ENCODE measurements at regions of chr13 and their contacts with region 1.

Region 1: DNA sequence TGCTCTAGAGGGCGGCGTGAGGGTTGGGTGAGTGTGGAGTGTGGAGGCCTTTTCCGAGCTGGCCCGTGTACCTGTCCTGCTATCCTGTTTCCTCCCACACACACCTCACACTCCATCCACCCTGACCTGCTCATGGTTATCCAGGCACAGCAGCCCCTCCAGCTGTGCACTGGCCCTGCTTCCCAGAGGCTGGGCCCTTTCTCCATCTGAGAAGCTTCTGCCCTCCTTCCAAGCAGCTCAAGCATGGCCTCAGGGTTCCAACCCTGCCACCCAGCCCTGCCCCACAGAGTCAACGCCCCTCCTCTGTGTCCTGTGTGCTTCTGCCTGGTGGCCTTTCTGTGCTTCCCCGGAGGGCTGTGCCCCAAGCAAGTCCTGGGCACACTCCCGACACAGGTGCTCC is 86.9 kb downstream of the SOX1 start:
- DNase-seq: no peak
- ATAC-seq: no peak
- H3K4me3 ChIP-seq: no peak overlapping the region
- H3K27ac ChIP-seq: no peak overlapping the region
- H3K4me1 ChIP-seq: no peaks in the 10 kb centered on the region
- H3K27me3 ChIP-seq: no peaks in the 10 kb centered on the region

Region 2: DNA sequence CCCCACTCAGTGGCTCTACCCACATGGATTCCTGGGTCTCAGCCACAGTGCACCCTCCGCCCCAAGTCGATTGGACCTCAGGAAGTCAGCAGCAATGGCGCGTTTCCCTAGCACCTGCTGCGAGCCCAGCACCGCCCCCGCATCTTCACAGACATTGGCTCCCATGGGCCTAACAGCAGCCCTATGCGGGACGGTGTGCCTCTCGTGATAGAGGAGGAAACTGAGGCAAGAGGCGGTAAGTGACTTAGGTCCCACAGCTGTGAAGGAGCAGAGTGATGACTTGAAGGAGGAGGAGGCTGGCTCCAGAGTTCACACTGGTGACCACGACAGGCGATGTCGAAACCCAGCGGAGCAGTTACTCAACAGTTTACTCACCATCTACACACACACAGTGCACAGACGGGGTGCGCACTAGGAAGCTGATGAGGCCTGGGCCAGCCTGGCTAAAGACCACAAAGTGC is 191.4 kb before region 1 on chr13:
- intact Hi-C with region 1: no loop called
- DNase-seq: no peak
- ATAC-seq: no peak
- H3K4me3 ChIP-seq: no peak overlapping the region
- H3K27ac ChIP-seq: no peak overlapping the region
- H3K4me1 ChIP-seq: no peaks in the 10 kb centered on the region
- H3K27me3 ChIP-seq: no peaks in the 10 kb centered on the region

Region 3: GRCh38 chr13:112170823-112171569 is 17.1 kb after region 1 on chr13:
- intact Hi-C with region 1: loop called in 1 of 2 experiments (anchors 2 kb)
- DNase-seq: peak in 1 of 2 donors; percentile 44
- ATAC-seq: no peak
- H3K4me3 ChIP-seq: no peak overlapping the region
- H3K27ac ChIP-seq: no peak overlapping the region
- H3K4me1 ChIP-seq: no peaks in the 10 kb centered on the region
- H3K27me3 ChIP-seq: no peaks in the 10 kb centered on the region

Measured in aorta (tissue), 5 donors.